ENCODE measurements at regions of chr9 and their contacts with region 1.

Region 1: DNA sequence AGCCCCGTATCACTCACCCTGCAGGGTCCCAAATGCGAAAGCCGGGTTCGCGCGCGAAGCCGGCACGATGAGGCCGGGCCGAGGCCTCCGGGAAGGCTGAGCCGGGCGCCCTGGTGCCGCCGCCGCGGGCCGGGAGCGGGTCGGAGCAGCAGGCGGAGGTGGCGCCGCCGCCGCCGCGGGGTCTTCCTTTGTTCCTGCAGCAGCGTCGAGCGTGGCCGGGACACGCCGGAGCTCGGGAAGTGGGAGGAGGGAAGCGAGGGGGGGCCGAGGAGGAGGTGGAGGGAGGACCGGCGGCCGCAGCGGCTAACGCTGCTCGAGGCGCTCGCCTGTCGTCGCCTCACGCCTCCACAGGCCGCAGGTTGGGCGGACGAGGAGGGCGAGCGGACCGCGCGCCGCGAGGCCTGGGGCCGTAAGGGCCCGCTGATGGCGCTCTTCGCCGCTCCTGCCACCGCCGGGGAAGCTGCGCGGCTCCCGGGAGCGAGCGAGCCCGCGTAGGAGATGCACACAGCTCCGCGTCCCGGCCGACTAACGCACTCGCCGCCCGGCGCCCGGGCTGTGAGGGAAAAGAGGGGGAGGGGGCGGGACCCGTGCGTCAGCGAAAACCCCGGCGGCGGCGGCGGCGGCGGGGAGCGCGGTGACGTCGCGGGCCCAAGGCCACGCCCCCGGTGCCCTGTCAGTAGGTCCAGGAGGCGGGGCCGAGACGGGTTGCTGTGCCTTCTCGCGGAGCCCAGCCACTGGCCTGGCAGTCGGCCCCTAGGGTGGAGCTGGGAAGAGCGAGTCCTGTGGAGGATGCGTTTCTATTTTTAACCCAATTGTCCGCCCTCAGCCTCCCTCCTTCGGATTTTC is at the start of gene ZFAND5:
- DNase-seq: peak; percentile 97
- H3K4me3 Mint-ChIP-seq: peak within 1 kb of the TSS; percentile 91
- H3K27ac Mint-ChIP-seq: peak within 1 kb of the TSS; percentile 96
- H3K4me1 Mint-ChIP-seq: peaks cover 32% of the 10 kb centered on the region
- H3K27me3 Mint-ChIP-seq: no peaks in the 10 kb centered on the region
- total RNA-seq, gene ZFAND5: 115 and 121 TPM in 2 replicates

Region 2: GRCh38 chr9:71911253-71912074 is 453.4 kb before region 1 on chr9 and contains the start of gene C9orf85:
- intact Hi-C with region 1: loop called (anchors 1 kb)
- DNase-seq: peak; percentile 99
- H3K4me3 Mint-ChIP-seq: peak within 1 kb of the TSS; percentile 100
- H3K27ac Mint-ChIP-seq: peak within 1 kb of the TSS; percentile 99
- H3K4me1 Mint-ChIP-seq: peaks cover 56% of the 10 kb centered on the region
- H3K27me3 Mint-ChIP-seq: no peaks in the 10 kb centered on the region
- total RNA-seq, gene C9orf85: 9.4 and 11.6 TPM in 2 replicates

Region 3: GRCh38 chr9:72280913-72281500 is 83.9 kb before region 1 on chr9:
- intact Hi-C with region 1: no loop called
- DNase-seq: peak; percentile 90
- H3K4me3 Mint-ChIP-seq: no peak overlapping the region
- H3K27ac Mint-ChIP-seq: no peak overlapping the region
- H3K4me1 Mint-ChIP-seq: no peaks in the 10 kb centered on the region
- H3K27me3 Mint-ChIP-seq: peaks cover 11% of the 10 kb centered on the region

Region 4: GRCh38 chr9:72333709-72334108 is 31.2 kb before region 1 on chr9:
- intact Hi-C with region 1: no loop called
- DNase-seq: no peak
- H3K4me3 Mint-ChIP-seq: no peak overlapping the region
- H3K27ac Mint-ChIP-seq: no peak overlapping the region
- H3K4me1 Mint-ChIP-seq: no peaks in the 10 kb centered on the region
- H3K27me3 Mint-ChIP-seq: peaks cover 21% of the 10 kb centered on the region

Region 5: DNA sequence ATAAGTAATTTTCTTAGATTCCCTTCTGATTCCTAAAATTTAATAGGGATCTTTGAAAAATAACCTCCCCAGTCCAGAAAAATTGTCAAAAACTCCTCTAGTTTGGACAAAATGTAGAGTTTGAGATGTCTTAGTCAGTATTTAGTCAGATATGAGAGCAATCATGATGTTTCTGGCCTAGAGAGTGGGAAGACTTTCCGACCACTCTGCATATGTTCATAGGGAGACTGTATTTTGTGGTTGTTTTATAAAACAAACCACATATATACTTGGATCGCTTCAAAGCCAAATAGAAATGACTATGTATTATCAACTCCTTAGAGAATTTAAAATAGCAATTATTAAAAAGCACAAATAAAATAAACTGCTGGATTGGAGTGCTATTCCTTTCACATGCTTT is 15.7 kb before region 1 on chr9:
- intact Hi-C with region 1: loop called (anchors 2 kb)
- DNase-seq: no peak
- H3K4me3 Mint-ChIP-seq: no peak overlapping the region
- H3K27ac Mint-ChIP-seq: no peak overlapping the region
- H3K4me1 Mint-ChIP-seq: peaks cover 22% of the 10 kb centered on the region
- H3K27me3 Mint-ChIP-seq: no peaks in the 10 kb centered on the region

Region 6: GRCh38 chr9:72443855-72444254 is 79.0 kb after region 1 on chr9:
- intact Hi-C with region 1: loop called (anchors 1 kb)
- DNase-seq: peak; percentile 66
- H3K4me3 Mint-ChIP-seq: peak overlapping the region; percentile 33
- H3K27ac Mint-ChIP-seq: peak overlapping the region; percentile 81
- H3K4me1 Mint-ChIP-seq: peaks cover 32% of the 10 kb centered on the region
- H3K27me3 Mint-ChIP-seq: peaks cover 3% of the 10 kb centered on the region

Region 7: DNA sequence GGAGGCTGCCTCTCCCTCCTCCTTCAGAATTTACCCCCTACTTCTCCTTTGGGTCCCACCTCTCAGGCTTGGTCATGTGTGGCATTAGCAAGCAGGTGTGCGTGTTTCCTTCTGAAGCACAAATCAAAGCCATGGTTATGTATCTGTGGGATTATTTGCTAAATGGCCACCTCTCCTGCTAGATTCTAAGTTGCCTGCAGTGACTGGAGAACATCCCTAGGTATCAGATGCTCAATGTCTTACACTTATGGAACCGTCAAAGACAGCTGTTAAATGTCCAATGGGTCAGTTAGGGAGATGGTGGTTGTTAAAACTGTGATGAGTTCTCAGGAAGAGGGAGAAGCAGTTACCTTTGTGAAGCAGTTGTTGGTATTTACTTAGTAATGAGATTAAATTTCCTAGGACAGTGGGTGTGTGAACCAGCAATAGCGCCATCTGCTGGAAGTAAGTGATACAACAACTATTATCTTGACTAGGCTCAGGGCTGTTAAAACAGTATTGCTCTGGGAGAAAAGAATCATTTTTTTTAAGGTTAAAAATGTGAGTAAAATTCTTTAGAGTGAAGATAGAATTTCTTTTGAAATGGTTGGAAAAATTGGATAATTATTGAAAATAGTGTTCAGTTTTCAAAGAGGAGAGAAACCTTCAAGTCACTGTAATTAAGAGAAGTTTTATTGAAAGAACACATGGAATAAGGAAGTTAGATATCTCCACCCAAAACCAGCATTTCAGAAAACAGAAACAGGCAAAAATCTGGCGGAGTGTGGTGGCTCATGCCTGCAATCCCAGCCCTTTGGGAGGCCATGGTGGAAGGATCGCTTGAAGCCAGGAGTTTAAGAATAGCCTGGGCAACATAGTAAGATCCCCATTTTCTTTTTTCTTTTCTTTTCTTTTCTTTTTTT is 227.9 kb after region 1 on chr9:
- intact Hi-C with region 1: loop called (anchors 1 kb)
- DNase-seq: peak; percentile 79
- H3K4me3 Mint-ChIP-seq: no peak overlapping the region
- H3K27ac Mint-ChIP-seq: no peak overlapping the region
- H3K4me1 Mint-ChIP-seq: peaks cover 45% of the 10 kb centered on the region
- H3K27me3 Mint-ChIP-seq: peaks cover 8% of the 10 kb centered on the region